Activated T-helper 2 cell treated with anti-CD3 and anti-CD28 coated beads, Interferon-gamma antibody, Interleukin-2, Interleukin-4, amounts not matched to agents 10 μg/mL and 5 μg/mL and 100 μg/mL, durations not matched to agents 14 hours and 24 hours and 36 hours (primary cell): ENCODE measurements at regions of chr3 and their contacts with region 1.

Region 1: GRCh38 chr3:189947948-189948723 is 172.6 kb downstream of the P3H2 start:
- DNase-seq: no peak
- H3K4me3 Mint-ChIP-seq: no peak overlapping the region
- H3K27ac Mint-ChIP-seq: no peak overlapping the region
- H3K4me1 Mint-ChIP-seq: peaks cover 18% of the 10 kb centered on the region
- H3K27me3 Mint-ChIP-seq: peaks cover 10% of the 10 kb centered on the region

Region 2: DNA sequence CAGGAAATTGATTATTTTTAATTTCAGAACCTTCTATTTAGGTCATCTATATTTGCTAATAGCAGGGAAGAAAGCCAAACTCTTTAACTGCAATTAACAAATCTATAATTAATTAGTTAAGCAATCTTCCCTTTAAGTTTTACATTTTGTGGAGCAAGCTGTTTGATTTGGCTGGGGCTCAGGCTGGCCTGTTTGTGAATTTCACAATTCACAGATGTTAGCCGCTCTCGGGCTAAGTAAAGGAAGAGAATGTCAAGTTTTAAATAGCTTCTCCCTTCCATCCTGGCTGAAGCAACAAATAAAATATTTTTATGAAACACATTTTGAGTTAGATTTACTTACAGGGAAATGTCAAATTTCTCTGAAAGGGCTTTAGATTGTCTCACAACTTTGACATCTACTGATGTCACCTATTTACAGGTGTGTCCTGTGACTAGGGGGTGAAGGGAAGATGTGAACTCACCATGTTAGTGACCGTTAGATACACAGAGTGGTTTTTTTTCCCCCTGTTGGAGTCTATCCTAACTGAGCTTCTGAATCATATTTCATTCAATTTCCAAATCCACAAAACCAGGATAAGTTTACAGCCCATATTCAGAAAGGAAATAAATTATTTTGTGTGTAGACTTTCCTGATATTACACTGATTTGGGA is 318.2 kb before region 1 on chr3:
- intact Hi-C with region 1: loop called (anchors 10 kb)
- DNase-seq: no peak
- H3K4me3 Mint-ChIP-seq: peak overlapping the region; percentile 41
- H3K27ac Mint-ChIP-seq: peak overlapping the region; percentile 50
- H3K4me1 Mint-ChIP-seq: peaks cover 47% of the 10 kb centered on the region
- H3K27me3 Mint-ChIP-seq: no peaks in the 10 kb centered on the region

Region 3: DNA sequence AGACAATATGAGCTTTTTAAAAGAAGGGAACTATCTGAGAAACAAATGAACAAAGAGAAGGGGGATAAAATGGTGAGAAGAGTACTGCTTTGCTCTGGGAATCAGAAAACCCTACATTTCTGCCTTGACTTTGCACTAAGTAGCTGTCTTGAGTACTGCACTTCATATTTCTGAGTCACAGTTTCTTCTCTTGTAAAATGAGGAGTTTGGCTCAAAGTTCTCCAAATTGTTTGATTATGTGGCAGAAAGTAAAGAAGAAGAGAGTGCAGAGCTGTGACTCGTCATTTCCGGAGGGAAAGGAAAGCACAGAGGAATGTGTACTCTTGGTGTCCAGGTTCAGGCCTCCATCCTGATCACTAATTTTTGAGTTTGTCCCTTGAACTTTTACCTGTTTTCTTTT is 262.3 kb before region 1 on chr3:
- intact Hi-C with region 1: loop called (anchors 10 kb)
- DNase-seq: no peak
- H3K4me3 Mint-ChIP-seq: no peak overlapping the region
- H3K27ac Mint-ChIP-seq: peak overlapping the region; percentile 51
- H3K4me1 Mint-ChIP-seq: peaks cover 43% of the 10 kb centered on the region
- H3K27me3 Mint-ChIP-seq: no peaks in the 10 kb centered on the region

Region 4: DNA sequence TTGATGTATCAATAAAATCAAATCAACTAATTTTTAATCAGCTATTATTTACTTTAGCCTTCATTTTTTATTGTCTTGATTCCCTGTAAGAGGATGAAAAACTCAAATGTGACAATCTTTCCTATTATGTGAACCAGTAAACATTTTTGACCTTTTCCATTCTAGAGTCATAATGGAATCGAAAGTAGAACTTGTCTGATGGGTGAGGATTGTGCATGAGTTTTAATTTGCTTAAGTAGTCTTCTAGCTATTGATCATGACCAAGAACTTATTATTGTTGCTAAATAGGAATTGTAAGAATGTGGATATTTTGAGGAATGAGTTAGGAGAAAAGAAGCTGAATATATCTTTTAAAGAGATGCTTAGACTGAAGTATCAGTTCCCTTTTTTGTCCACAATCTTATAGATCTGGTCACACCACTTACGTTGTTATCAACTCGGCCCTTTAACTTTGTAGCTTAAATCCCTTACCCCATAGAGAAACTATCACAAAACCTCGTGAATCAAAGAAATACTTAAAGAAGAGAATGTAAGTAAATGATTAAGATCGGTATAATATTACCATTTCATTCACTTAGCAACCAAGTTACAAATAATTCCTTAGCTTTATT is 169.7 kb before region 1 on chr3:
- intact Hi-C with region 1: loop called (anchors 5 kb)
- DNase-seq: no peak
- H3K4me3 Mint-ChIP-seq: no peak overlapping the region
- H3K27ac Mint-ChIP-seq: peak overlapping the region; percentile 58
- H3K4me1 Mint-ChIP-seq: peaks cover 12% of the 10 kb centered on the region
- H3K27me3 Mint-ChIP-seq: no peaks in the 10 kb centered on the region